H1 (cell line): ENCODE measurements at regions of chr1 and their contacts with region 1.

Region 1: DNA sequence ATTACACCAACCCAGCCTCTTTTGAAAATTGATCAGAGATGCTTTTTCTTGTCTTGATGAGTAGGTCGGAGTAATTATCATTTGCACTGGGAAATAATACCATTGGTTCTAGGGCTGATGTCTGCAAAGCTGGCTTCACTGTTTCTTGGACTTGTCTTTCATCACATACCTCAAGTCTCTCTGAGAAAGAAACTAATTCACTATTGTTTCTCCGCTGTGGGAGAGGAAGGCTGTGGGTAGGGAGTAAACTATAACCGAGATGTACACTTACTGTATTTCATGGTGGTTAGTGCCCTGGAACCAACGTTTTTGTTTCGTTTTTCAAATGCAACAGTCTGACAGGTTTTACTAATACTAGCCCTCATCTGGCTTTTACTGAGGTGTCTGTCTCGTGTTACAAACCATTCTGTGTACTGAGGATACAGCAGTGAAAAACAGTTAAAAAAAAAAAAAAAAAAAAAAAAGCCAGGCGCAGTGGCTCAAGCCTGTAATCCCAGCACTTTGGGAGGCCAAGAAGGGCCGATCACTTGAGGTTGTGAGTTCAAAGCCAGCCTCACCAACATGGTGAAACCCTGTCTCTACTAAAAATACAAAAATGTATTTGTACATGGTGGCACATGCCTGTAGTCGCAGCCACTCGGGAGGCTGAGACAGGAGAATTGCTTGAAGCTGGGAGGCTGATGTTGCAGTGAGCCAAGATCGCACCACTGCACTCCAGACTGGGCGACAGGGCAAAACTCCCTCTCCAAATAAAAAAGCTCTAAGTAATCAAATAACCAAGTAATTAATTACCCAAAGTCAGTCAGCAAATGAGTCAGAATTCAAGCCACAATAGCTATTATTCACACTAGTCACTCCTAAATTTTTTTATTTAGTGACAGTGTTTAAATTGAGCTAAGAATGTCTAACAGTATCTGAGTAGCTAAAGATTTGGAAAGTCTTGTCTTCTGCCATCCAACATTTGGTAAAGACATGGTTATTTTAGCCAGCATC is 23.3 kb downstream of the TOMM20 start:
- DNase-seq: peak in 1 of 2 experiments; percentile 43
- H3K4me3 ChIP-seq: no peak overlapping the region
- H3K27ac ChIP-seq: no peak overlapping the region
- H3K4me1 ChIP-seq: peaks cover 0 to 3% (median 0%) of the 10 kb centered on the region in 4 experiments; a peak in 3 of 7 replicates
- H3K27me3 ChIP-seq: no peaks in the 10 kb centered on the region
- CTCF ChIP-seq: no peak
- EP300 ChIP-seq: no peak
- POLR2A ChIP-seq: no peak
- RAD21 ChIP-seq: no peak

Region 2: GRCh38 chr1:235045034-235045720 is 60.2 kb before region 1 on chr1:
- CTCF ChIA-PET with region 1: no interaction called
- POLR2A ChIA-PET with region 1: no interaction called
- DNase-seq: no peak
- H3K4me3 ChIP-seq: no peak overlapping the region
- H3K27ac ChIP-seq: no peak overlapping the region
- H3K4me1 ChIP-seq: no peaks in the 10 kb centered on the region
- H3K27me3 ChIP-seq: no peaks in the 10 kb centered on the region
- CTCF ChIP-seq: no peak
- EP300 ChIP-seq: no peak
- POLR2A ChIP-seq: no peak
- RAD21 ChIP-seq: no peak

Region 3: GRCh38 chr1:235093696-235094592 is 11.4 kb before region 1 on chr1:
- CTCF ChIA-PET with region 1: interaction called, 68 read pairs
- POLR2A ChIA-PET with region 1: interaction called, 5 read pairs
- DNase-seq: peak in 1 of 2 experiments; percentile 95
- H3K4me3 ChIP-seq: peak overlapping the region in 3 of 4 experiments; percentile 20 to 46 (median 33); a peak in 5 of 8 replicates
- H3K27ac ChIP-seq: no peak overlapping the region
- H3K4me1 ChIP-seq: peaks cover 2 to 24% (median 20%) of the 10 kb centered on the region in 4 experiments
- H3K27me3 ChIP-seq: no peaks in the 10 kb centered on the region
- CTCF ChIP-seq: peak; percentile 72 to 88 (median 85)
- EP300 ChIP-seq: no peak
- POLR2A ChIP-seq: no peak
- RAD21 ChIP-seq: peak; percentile 79 to 82

Region 4: DNA sequence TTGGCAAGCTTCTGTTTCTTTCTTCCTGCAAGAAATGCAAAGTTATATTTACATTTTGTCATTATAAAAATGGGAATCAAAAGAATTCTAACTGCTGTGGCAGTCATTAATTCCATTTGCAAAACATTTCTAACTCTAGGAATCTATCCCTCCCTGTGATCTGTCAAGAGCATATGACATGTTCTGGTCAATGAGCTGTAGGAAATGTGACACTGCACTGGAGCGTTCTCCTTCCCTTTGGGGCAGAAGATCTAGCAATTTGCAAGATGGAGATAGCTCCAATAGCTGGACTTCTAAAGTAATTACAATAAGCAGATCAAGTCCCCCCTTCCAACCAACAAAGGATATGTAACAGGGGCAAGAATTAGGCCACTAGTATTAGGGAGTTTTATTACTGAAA is 17.0 kb after region 1 on chr1:
- CTCF ChIA-PET with region 1: interaction called, 9 read pairs
- POLR2A ChIA-PET with region 1: interaction called, 83 read pairs
- DNase-seq: peak in 1 of 2 experiments; percentile 6
- H3K4me3 ChIP-seq: no peak overlapping the region
- H3K27ac ChIP-seq: no peak overlapping the region
- H3K4me1 ChIP-seq: no peaks in the 10 kb centered on the region; a peak in 3 of 7 replicates
- H3K27me3 ChIP-seq: no peaks in the 10 kb centered on the region
- CTCF ChIP-seq: no peak
- EP300 ChIP-seq: no peak
- POLR2A ChIP-seq: no peak
- RAD21 ChIP-seq: no peak